Natural killer cell (primary cell): ENCODE measurements at regions of chr1 and their contacts with region 1.

Region 1: DNA sequence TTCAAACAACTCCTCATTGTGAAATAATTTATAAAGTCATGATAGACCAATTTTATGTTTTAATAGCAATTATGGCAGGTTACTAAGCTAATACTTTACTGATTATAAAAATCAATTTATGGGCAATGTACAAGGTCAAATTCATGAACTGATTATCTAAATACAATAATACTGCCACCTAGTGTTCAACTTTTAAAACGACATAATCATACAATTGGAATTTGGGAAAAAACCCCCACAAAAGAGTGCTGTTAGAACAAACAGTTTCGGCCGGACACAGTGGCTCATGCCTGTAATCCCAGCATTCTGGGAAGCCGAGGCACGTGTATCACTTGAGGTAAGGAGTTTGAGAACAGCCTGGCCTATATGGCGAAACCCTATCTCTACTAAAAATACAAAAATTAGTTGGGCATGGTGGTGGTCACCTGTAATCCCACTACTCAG is 14.0 kb downstream of the GTF2B start:
- DNase-seq: peak in 1 of 2 donors; percentile 45
- ATAC-seq: no peak
- H3K4me3 ChIP-seq: no peak overlapping the region
- H3K4me3 Mint-ChIP-seq: no peak overlapping the region
- H3K27ac ChIP-seq: no peak overlapping the region
- H3K27ac Mint-ChIP-seq: peak overlapping the region; percentile 38 to 57
- H3K4me1 ChIP-seq: peaks cover 5% of the 10 kb centered on the region
- H3K4me1 Mint-ChIP-seq: peaks cover 34 to 41% of the 10 kb centered on the region in 2 donors
- H3K27me3 ChIP-seq: no peaks in the 10 kb centered on the region
- H3K27me3 Mint-ChIP-seq: no peaks in the 10 kb centered on the region
- CTCF ChIP-seq: peak; percentile 65

Region 2: GRCh38 chr1:88519156-88519555 is 358.2 kb before region 1 on chr1:
- intact Hi-C with region 1: no loop called
- DNase-seq: no peak
- ATAC-seq: no peak
- H3K4me3 ChIP-seq: no peak overlapping the region
- H3K4me3 Mint-ChIP-seq: no peak overlapping the region
- H3K27ac ChIP-seq: no peak overlapping the region
- H3K27ac Mint-ChIP-seq: no peak overlapping the region
- H3K4me1 ChIP-seq: no peaks in the 10 kb centered on the region
- H3K4me1 Mint-ChIP-seq: no peaks in the 10 kb centered on the region
- H3K27me3 ChIP-seq: no peaks in the 10 kb centered on the region
- H3K27me3 Mint-ChIP-seq: peaks cover 7 to 8% of the 10 kb centered on the region in 2 donors
- CTCF ChIP-seq: no peak

Region 3: DNA sequence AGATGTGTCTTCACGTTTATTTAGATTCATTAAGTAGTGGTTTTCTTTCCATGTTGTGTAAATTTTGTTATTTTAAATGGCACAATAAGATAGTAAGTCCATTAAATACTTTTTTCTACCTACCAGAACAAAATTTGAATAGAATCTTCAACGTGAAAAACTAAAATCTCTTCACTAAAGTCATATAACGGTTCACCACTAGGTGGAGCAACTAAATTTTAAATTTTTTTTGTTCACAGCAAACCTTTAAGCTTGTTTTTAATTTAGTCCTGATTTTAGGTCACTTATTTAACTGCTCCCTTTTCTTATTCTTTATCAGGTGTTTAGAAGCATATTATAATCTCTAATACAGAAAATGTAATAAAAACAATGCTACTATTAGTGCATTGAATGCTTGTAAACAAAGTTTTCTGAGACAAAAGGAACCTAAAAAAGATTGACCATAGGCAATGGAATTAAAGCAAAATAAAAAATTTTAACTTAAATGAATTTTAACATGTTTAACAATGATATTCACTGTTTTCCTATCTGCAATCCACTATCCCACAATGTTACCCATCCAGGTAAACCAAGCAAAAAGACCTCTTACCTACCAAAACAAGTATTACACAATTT is 221.6 kb before region 1 on chr1:
- intact Hi-C with region 1: loop called (anchors 5 kb)
- DNase-seq: peak in 1 of 2 donors; percentile 68
- ATAC-seq: no peak
- H3K4me3 ChIP-seq: no peak overlapping the region
- H3K4me3 Mint-ChIP-seq: no peak overlapping the region
- H3K27ac ChIP-seq: no peak overlapping the region
- H3K27ac Mint-ChIP-seq: no peak overlapping the region
- H3K4me1 ChIP-seq: no peaks in the 10 kb centered on the region
- H3K4me1 Mint-ChIP-seq: no peaks in the 10 kb centered on the region
- H3K27me3 ChIP-seq: no peaks in the 10 kb centered on the region
- H3K27me3 Mint-ChIP-seq: peaks cover 2 to 4% of the 10 kb centered on the region in 2 donors
- CTCF ChIP-seq: peak; percentile 79

Region 4: DNA sequence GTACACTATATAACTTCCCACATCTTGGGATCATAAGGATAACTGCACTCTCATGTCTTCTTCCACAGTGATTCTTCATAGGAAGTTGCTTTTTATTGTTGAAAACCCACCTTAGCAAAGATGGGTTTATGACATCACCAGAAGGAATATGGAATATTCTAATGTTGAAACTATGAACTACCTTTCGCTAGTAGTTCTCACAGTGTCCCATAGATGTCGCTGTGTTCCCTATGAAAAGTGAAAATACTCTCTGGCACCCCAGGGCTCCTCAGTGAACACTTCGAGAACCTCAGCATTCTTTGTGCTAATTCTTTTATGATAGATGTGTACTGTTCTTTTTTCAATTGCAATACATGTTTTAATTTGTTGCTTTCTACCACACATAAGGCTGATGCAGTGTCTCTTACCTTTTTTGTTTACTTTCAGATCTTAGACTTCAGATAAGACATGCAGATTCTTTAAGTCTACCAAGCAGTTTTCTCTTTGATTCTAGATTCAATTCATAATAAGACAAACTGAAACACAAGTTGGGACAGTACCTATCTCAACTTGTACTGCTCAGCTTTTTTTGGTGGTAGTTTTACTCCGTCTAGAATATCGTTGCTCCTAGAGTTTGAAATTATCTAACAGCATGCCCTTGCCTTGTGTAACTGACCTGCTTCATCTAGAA is 76.9 kb before region 1 on chr1:
- intact Hi-C with region 1: loop called (anchors 1 kb)
- DNase-seq: peak in 1 of 2 donors; percentile 72
- ATAC-seq: peak; percentile 75 to 85 (median 82)
- H3K4me3 ChIP-seq: no peak overlapping the region
- H3K4me3 Mint-ChIP-seq: no peak overlapping the region
- H3K27ac ChIP-seq: no peak overlapping the region
- H3K27ac Mint-ChIP-seq: no peak overlapping the region
- H3K4me1 ChIP-seq: no peaks in the 10 kb centered on the region
- H3K4me1 Mint-ChIP-seq: peaks cover 5% of the 10 kb centered on the region in 2 donors
- H3K27me3 ChIP-seq: no peaks in the 10 kb centered on the region
- H3K27me3 Mint-ChIP-seq: no peaks in the 10 kb centered on the region
- CTCF ChIP-seq: peak; percentile 78

Region 5: GRCh38 chr1:88961647-88962275 is 84.4 kb after region 1 on chr1:
- intact Hi-C with region 1: no loop called
- DNase-seq: no peak
- ATAC-seq: no peak
- H3K4me3 ChIP-seq: no peak overlapping the region
- H3K4me3 Mint-ChIP-seq: no peak overlapping the region
- H3K27ac ChIP-seq: no peak overlapping the region
- H3K27ac Mint-ChIP-seq: no peak overlapping the region
- H3K4me1 ChIP-seq: no peaks in the 10 kb centered on the region
- H3K4me1 Mint-ChIP-seq: no peaks in the 10 kb centered on the region
- H3K27me3 ChIP-seq: no peaks in the 10 kb centered on the region
- H3K27me3 Mint-ChIP-seq: no peaks in the 10 kb centered on the region
- CTCF ChIP-seq: no peak

Region 6: GRCh38 chr1:89065079-89065868 is 187.9 kb after region 1 on chr1 and contains the start of gene GBP1:
- intact Hi-C with region 1: no loop called
- DNase-seq: peak in 1 of 2 donors; percentile 73
- ATAC-seq: peak; percentile 86 to 88 (median 87)
- H3K4me3 ChIP-seq: peak within 1 kb of the TSS; percentile 89
- H3K4me3 Mint-ChIP-seq: peak within 1 kb of the TSS; percentile 98
- H3K27ac ChIP-seq: peak within 1 kb of the TSS; percentile 94
- H3K27ac Mint-ChIP-seq: peak within 1 kb of the TSS; percentile 87 to 95
- H3K4me1 ChIP-seq: peaks cover 9% of the 10 kb centered on the region
- H3K4me1 Mint-ChIP-seq: peaks cover 55 to 58% of the 10 kb centered on the region in 2 donors
- H3K27me3 ChIP-seq: no peaks in the 10 kb centered on the region
- H3K27me3 Mint-ChIP-seq: no peaks in the 10 kb centered on the region
- CTCF ChIP-seq: no peak
- total RNA-seq, gene GBP1: 32.0 to 41.2 (median 34.8) TPM

Region 7: DNA sequence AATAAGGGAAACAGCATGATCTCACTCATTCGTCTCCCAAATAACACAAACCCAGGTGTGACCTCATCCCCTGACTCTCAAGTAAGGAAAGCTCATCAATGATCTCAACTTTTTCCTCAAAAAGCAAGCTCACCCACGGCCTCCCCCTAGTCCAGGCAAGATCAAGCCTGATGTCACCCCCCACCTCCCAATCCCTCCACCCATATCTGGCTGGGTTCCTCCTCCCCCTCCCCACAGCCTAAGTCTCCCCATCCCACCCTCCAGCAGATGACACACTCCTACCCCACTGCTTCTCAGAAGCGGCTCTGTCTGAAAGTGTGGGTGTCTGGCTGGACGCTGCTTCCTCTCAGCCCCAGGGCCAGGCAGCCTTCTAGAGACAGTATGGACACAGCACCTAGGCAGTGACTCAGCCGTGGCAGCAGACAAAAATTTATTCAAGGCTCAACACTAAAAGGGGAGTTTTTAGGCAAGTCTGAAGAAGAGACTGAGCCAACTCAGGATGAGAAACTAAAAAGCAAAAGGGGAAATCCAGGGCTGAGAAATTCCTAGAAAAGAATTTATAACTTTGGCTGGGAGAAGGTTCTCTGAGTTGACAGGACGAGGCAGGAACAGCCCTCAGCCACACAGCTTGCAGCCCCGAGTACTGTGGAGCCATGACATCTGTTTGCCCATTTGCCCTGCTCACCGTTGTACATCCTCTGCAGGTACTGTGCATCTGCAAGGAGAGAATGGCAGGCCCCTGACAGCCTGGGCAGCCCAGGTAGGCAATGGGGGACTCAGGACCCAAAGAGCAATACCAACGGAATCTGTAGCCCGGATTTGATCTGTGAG is 861.8 kb after region 1 on chr1:
- intact Hi-C with region 1: no loop called
- DNase-seq: peak in 1 of 2 donors; percentile 48
- ATAC-seq: peak; percentile 64 to 86 (median 74)
- H3K4me3 ChIP-seq: no peak overlapping the region
- H3K4me3 Mint-ChIP-seq: peak overlapping the region; percentile 43
- H3K27ac ChIP-seq: peak overlapping the region; percentile 40
- H3K27ac Mint-ChIP-seq: peak overlapping the region; percentile 75 to 83
- H3K4me1 ChIP-seq: peaks cover 16% of the 10 kb centered on the region
- H3K4me1 Mint-ChIP-seq: peaks cover 34 to 43% of the 10 kb centered on the region in 2 donors
- H3K27me3 ChIP-seq: no peaks in the 10 kb centered on the region
- H3K27me3 Mint-ChIP-seq: no peaks in the 10 kb centered on the region
- CTCF ChIP-seq: no peak